Activated CD4-positive, alpha-beta T cell treated with anti-CD3 and anti-CD28 coated beads, Interleukin-2, amount 10 ng/mL, durations not matched to agents 7 days and 5 days (primary cell): ENCODE measurements at regions of chr3 and their contacts with region 1.

Region 1: GRCh38 chr3:113002679-113003078 is 11.9 kb downstream of the GTPBP8 start:
- DNase-seq: peak; percentile 57
- H3K4me3 Mint-ChIP-seq: no peak overlapping the region
- H3K27ac Mint-ChIP-seq: peak overlapping the region; percentile 60
- H3K4me1 Mint-ChIP-seq: peaks cover 67% of the 10 kb centered on the region
- H3K27me3 Mint-ChIP-seq: no peaks in the 10 kb centered on the region

Region 2: GRCh38 chr3:112990672-112991602 is 11.7 kb before region 1 on chr3 and contains the start of gene GTPBP8:
- CTCF ChIA-PET with region 1: interaction called, 23 read pairs
- POLR2A ChIA-PET with region 1: interaction called, 5 read pairs
- DNase-seq: peak; percentile 89
- H3K4me3 Mint-ChIP-seq: peak within 1 kb of the TSS; percentile 91
- H3K27ac Mint-ChIP-seq: peak within 1 kb of the TSS; percentile 94
- H3K4me1 Mint-ChIP-seq: peaks cover 69% of the 10 kb centered on the region
- H3K27me3 Mint-ChIP-seq: no peaks in the 10 kb centered on the region
- total RNA-seq, gene GTPBP8: 27.6 to 29.6 TPM